Endothelial cell of umbilical vein (primary cell): ENCODE measurements at regions of chr11 and their contacts with region 1.

Region 1: GRCh38 chr11:44793350-44794090 is 66.8 kb downstream of the TSPAN18 start:
- DNase-seq: no peak
- H3K4me3 ChIP-seq: no peak overlapping the region
- H3K27ac ChIP-seq: no peak overlapping the region
- H3K4me1 ChIP-seq: peaks cover 15% of the 10 kb centered on the region
- H3K27me3 ChIP-seq: no peaks in the 10 kb centered on the region
- CTCF ChIP-seq: no peak
- POLR2A ChIP-seq: no peak

Region 2: DNA sequence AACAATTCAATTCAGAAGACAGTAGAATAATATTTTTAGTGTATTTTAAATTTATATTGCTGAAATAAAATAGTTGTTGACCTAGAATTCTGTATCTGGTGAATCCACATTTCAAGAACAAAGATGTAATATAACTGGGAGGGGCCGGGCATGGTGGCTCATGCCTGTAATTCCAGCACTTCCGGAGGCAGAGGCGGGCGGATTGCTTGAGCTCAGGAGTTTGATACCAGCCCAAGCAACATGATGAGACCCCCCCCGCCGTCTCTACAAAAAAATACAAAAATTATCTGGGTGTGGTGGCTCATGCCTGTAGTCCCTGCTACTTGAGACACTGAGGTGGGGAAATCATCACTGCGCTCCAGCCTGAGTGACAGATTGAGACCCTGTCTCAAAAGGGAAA is 155.5 kb before region 1 on chr11:
- CTCF ChIA-PET with region 1: no interaction called
- POLR2A ChIA-PET with region 1: no interaction called
- dilution Hi-C with region 1: no loop called
- intact Hi-C with region 1: no loop called
- DNase-seq: no peak
- H3K4me3 ChIP-seq: no peak overlapping the region
- H3K27ac ChIP-seq: no peak overlapping the region
- H3K4me1 ChIP-seq: peaks cover 20% of the 10 kb centered on the region
- H3K27me3 ChIP-seq: no peaks in the 10 kb centered on the region
- CTCF ChIP-seq: no peak
- POLR2A ChIP-seq: no peak

Region 3: DNA sequence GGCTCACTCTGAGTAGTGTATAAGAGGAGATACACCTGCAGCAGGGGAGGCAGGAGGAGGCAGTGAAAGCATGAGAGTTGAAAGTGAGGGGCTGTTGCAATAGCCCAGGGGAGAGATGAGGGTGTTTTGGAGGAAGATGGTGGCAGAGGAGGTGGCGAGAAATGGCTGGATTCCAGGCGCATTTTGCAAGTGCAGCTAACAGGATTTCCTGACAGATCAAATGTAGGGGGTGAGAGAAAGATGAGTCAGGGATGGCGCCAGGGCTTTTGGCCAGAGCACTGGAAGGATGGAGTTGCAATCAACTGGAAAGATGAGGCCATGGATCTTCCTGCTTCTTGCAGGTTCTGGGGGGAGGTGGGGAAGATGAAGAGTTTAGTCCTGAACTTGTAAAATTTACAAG is 83.6 kb before region 1 on chr11:
- CTCF ChIA-PET with region 1: no interaction called
- POLR2A ChIA-PET with region 1: no interaction called
- dilution Hi-C with region 1: no loop called
- intact Hi-C with region 1: no loop called
- DNase-seq: peak; percentile 59
- H3K4me3 ChIP-seq: no peak overlapping the region
- H3K27ac ChIP-seq: no peak overlapping the region
- H3K4me1 ChIP-seq: peaks cover 25% of the 10 kb centered on the region
- H3K27me3 ChIP-seq: no peaks in the 10 kb centered on the region
- CTCF ChIP-seq: no peak
- POLR2A ChIP-seq: no peak

Region 4: DNA sequence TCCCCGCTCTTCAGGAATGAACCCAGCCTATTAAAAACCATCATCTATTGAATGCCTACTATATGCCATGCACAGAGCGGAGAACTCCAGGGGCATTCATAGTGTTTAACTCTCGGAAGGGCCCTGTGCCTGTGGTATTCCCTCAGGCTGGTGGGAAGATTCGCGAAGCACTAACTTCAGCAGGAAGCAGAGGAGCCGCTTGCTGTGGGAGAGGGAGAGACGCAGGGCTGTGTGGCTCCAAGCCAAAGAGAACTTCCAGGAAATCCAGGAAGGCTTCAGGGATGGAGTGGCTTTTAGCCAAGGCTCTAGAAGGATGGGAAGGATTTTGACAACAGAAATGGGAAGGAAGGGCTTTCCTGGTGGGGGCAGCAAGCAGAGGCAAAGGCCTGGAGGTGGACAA is 53.3 kb after region 1 on chr11:
- CTCF ChIA-PET with region 1: no interaction called
- POLR2A ChIA-PET with region 1: no interaction called
- dilution Hi-C with region 1: no loop called
- intact Hi-C with region 1: loop called (anchors 1 kb)
- DNase-seq: no peak
- H3K4me3 ChIP-seq: no peak overlapping the region
- H3K27ac ChIP-seq: no peak overlapping the region
- H3K4me1 ChIP-seq: no peaks in the 10 kb centered on the region
- H3K27me3 ChIP-seq: peaks cover 0 to 2% of the 10 kb centered on the region in 2 experiments
- CTCF ChIP-seq: no peak
- POLR2A ChIP-seq: no peak